CD8-positive, alpha-beta T cell (primary cell): ENCODE measurements at regions of chr6 and their contacts with region 1.

Region 1: DNA sequence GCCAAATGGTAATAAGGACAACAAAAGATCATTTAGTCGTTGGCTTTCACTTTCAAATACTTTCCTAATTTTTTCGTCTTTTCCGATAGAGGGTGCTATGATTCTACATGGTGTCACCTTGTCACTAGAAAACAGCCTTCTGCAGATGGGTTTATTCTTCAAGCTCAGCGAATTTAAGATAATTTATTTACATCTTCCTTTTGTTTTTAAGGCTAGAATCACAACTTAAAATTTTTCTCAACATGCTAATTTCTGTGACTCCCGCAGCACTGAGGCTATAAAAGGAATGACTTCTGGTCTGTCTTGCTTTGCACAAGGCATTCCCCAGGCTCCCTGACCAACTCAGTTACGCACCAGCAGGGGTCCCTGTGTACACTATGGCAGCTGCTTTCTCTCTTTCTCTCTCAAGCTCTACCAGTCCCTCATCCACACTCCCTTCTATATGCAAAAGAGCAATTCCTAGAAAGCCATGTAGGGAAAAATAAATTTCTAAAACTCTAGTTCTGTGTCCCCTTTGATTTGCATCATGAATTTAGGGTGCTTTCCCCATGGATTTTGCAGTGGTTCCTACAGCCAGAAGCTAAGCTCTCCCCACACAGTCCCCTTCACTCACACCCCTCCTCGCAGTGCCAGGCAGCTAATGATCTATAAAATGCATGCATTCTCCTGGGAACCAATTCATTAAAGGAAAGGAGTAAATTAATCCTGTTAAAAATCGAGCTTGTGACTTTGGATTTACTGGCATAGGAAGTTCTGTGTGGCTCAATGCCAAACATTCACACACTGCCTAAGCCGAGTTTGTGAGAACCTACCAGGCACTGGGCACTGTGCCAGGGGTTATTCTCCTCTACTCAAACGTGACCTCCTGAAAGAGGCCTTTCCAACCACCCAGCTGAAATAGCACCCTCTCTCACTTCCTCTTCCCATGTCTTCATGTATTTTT is 74.5 kb downstream of the DCDC2 start:
- DNase-seq: peak in 4 of 9 experiments; percentile 21 to 53 (median 30)
- ATAC-seq: peak; percentile 70
- H3K4me3 ChIP-seq: no peak overlapping the region
- H3K4me3 Mint-ChIP-seq: peak overlapping the region; percentile 40
- H3K27ac ChIP-seq: no peak overlapping the region
- H3K27ac Mint-ChIP-seq: no peak overlapping the region
- H3K4me1 ChIP-seq: no peaks in the 10 kb centered on the region
- H3K4me1 Mint-ChIP-seq: peaks cover 8% of the 10 kb centered on the region
- H3K27me3 ChIP-seq: no peaks in the 10 kb centered on the region
- H3K27me3 Mint-ChIP-seq: peaks cover 7% of the 10 kb centered on the region
- CTCF ChIP-seq: peak; percentile 51

Region 2: DNA sequence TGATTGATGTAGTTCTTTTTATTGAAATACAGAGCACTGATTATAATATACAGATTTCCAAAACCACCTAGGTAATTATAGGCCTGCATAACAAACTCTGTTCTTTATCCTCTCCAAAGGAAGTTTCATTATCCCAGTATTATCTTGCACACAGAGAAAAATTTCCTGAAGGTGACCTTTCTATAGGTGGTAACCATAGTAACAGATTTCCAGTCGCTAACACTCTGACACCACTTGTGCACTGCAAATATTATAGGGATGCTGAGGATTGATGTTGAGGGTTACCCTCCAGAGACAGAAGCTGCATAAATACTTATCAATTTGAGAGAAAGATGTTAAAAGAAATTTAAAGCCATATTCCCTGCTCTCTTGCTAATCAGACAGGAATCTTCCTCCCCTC is 431.8 kb before region 1 on chr6:
- CTCF ChIA-PET with region 1: no interaction called
- POLR2A ChIA-PET with region 1: no interaction called
- intact Hi-C with region 1: no loop called
- DNase-seq: no peak
- ATAC-seq: no peak
- H3K4me3 ChIP-seq: no peak overlapping the region
- H3K4me3 Mint-ChIP-seq: no peak overlapping the region
- H3K27ac ChIP-seq: no peak overlapping the region
- H3K27ac Mint-ChIP-seq: no peak overlapping the region
- H3K4me1 ChIP-seq: no peaks in the 10 kb centered on the region
- H3K4me1 Mint-ChIP-seq: no peaks in the 10 kb centered on the region
- H3K27me3 ChIP-seq: no peaks in the 10 kb centered on the region
- H3K27me3 Mint-ChIP-seq: no peaks in the 10 kb centered on the region
- CTCF ChIP-seq: no peak

Region 3: GRCh38 chr6:24357336-24358218 is 74.3 kb after region 1 on chr6 and contains the start of gene DCDC2:
- CTCF ChIA-PET with region 1: interaction called, 6 read pairs
- POLR2A ChIA-PET with region 1: no interaction called
- intact Hi-C with region 1: loop called in 1 of 2 experiments (anchors 2 kb)
- DNase-seq: peak in 7 of 9 experiments; percentile 17 to 60 (median 48)
- ATAC-seq: peak; percentile 29
- H3K4me3 ChIP-seq: peak within 1 kb of the TSS; percentile 36 to 54
- H3K4me3 Mint-ChIP-seq: peak within 1 kb of the TSS; percentile 84
- H3K27ac ChIP-seq: no peak within 1 kb of the TSS
- H3K27ac Mint-ChIP-seq: no peak within 1 kb of the TSS
- H3K4me1 ChIP-seq: peaks cover 11% of the 10 kb centered on the region
- H3K4me1 Mint-ChIP-seq: peaks cover 24% of the 10 kb centered on the region
- H3K27me3 ChIP-seq: peaks cover 0 to 2% of the 10 kb centered on the region in 2 experiments
- H3K27me3 Mint-ChIP-seq: peaks cover 4% of the 10 kb centered on the region
- CTCF ChIP-seq: no peak
- total RNA-seq, gene DCDC2: not detected

Region 4: GRCh38 chr6:24689964-24690363 is 406.6 kb after region 1 on chr6:
- CTCF ChIA-PET with region 1: no interaction called
- POLR2A ChIA-PET with region 1: no interaction called
- intact Hi-C with region 1: loop called (anchors 5 to 10 kb)
- DNase-seq: no peak
- ATAC-seq: no peak
- H3K4me3 ChIP-seq: no peak overlapping the region
- H3K4me3 Mint-ChIP-seq: no peak overlapping the region
- H3K27ac ChIP-seq: no peak overlapping the region
- H3K27ac Mint-ChIP-seq: no peak overlapping the region
- H3K4me1 ChIP-seq: peaks cover 10% of the 10 kb centered on the region
- H3K4me1 Mint-ChIP-seq: peaks cover 11% of the 10 kb centered on the region
- H3K27me3 ChIP-seq: no peaks in the 10 kb centered on the region
- H3K27me3 Mint-ChIP-seq: no peaks in the 10 kb centered on the region
- CTCF ChIP-seq: no peak

Region 5: GRCh38 chr6:24699521-24700359 is 416.4 kb after region 1 on chr6:
- CTCF ChIA-PET with region 1: no interaction called
- POLR2A ChIA-PET with region 1: no interaction called
- intact Hi-C with region 1: loop called (anchors 5 to 10 kb)
- DNase-seq: no peak
- ATAC-seq: no peak
- H3K4me3 ChIP-seq: no peak overlapping the region
- H3K4me3 Mint-ChIP-seq: no peak overlapping the region
- H3K27ac ChIP-seq: peak overlapping the region in 1 of 2 experiments; percentile 0
- H3K27ac Mint-ChIP-seq: peak overlapping the region; percentile 71
- H3K4me1 ChIP-seq: no peaks in the 10 kb centered on the region
- H3K4me1 Mint-ChIP-seq: peaks cover 24% of the 10 kb centered on the region
- H3K27me3 ChIP-seq: no peaks in the 10 kb centered on the region
- H3K27me3 Mint-ChIP-seq: no peaks in the 10 kb centered on the region
- CTCF ChIP-seq: no peak